Left cardiac atrium (tissue), 4 donors: ENCODE measurements at regions of chr14 and their contacts with region 1.

Region 1: DNA sequence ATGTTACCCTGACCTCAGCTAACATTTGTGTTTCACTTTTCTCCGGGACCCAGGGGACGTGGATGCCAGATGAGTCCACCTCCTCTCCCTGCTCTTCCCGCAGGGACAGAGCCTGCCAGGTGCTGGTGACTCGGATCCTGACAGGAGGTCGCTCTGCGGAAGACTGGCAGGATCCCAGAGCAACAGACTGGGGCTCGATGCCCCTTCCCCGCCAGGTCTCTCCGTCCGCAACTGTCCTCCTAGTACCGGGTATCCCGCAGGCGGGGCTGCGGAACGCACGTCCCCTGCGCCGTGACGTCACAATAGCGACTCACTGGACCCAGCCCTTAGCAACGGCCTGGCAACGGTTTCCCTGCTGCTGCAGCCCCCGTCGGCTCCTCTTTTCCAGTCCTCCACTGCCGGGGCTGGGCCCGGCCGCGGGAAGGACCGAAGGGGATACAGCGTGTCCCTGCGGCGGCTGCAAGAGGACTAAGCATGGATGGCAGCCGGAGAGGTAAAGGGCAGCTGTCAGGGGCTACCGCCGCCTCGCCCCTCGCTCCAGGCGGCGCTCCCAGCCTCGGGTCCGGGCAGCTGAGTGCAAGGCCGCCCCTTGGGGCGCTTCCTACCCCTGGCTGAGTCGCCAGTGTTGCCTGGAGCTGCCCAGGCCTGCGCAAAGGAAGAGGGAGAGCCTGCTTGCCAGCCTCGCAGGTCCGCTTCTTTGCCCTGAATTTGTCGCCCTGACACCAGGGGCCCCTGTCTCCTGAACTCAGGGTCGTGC is at the start of gene SPATA7:
- DNase-seq: peak; percentile 98
- ATAC-seq: peak; percentile 99 to 100
- total RNA-seq, gene SPATA7: 6.3 to 10.8 TPM

Region 2: GRCh38 chr14:87944987-87945604 is 440.4 kb before region 1 on chr14:
- intact Hi-C with region 1: loop called in 1 of 2 experiments (anchors 10 kb)
- DNase-seq: no peak
- ATAC-seq: no peak

Region 3: DNA sequence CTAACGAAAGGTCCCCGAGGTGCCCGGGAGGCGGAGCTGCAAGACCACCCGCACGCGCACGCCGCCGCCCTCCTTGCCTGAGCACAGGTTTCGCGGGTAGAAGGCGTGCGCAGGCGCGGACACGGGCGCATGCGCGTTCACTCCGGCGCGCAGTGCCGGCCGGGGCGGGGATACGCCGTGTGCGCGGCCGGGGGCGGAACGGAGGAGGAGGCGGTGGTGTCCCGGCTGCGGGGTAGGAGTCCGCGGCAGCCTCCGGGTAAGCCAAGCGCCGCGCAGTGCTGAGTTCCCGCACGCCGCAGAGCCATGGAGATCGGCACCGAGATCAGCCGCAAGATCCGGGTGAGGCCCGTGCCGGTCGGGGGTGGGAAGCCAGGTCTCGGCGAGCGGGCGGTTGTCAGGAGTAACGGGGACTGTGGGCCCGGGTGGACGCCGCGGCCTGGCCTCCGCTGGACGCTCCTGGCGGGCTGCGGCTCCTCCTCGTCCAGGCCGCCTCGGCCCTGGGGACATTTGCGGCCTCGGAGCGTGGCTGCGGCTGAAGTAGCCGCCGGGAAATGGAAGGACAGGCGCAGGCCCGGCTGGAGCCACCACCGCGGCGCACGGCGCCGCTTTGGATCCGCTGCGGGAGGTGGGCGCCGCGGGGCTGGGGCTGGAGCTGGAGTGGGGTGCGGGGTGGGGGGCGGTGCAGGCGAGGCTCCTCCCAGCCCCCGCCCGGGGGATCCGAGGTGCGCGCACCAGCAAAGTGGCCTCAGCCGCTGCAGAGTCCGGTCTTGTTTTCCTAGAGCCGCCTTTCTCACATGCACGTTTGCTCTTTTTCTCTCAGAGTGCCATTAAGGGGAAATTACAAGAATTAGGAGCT is 177.5 kb after region 1 on chr14 and contains the start of gene ZC3H14:
- intact Hi-C with region 1: loop called in 1 of 2 experiments (anchors 5 kb)
- DNase-seq: peak; percentile 88
- ATAC-seq: peak; percentile 98 to 99
- total RNA-seq, gene ZC3H14: 38.0 to 41.4 TPM

Region 4: GRCh38 chr14:88824314-88825077 is 439.0 kb after region 1 on chr14 and contains the start of gene TTC8:
- intact Hi-C with region 1: no loop called
- DNase-seq: peak; percentile 92
- ATAC-seq: peak; percentile 100
- total RNA-seq, gene TTC8: 8.7 to 9.3 TPM